Left colon (tissue), 2 donors: ENCODE measurements at regions of chrX and their contacts with region 1.

Region 1: GRCh38 chrX:108224727-108225621 is 133.4 kb downstream of the ATG4A start:
- DNase-seq: no peak
- ATAC-seq: no peak

Region 2: GRCh38 chrX:108537005-108537404 is 312.0 kb after region 1 on chrX:
- intact Hi-C with region 1: loop called in 1 of 2 experiments (anchors 5 kb)
- DNase-seq: no peak
- ATAC-seq: peak; percentile 47